Spleen (tissue), 13 donors: ENCODE measurements at regions of chr3 and their contacts with region 1.

Region 1: GRCh38 chr3:40191850-40192448 is 117.6 kb upstream of the EIF1B start:
- DNase-seq: peak; percentile 80
- H3K4me3 ChIP-seq: no peak overlapping the region
- H3K27ac ChIP-seq: no peak overlapping the region
- H3K4me1 ChIP-seq: no peaks in the 10 kb centered on the region
- H3K27me3 ChIP-seq: no peaks in the 10 kb centered on the region
- CTCF ChIP-seq: peak; percentile 82 to 95 (median 88)
- POLR2A ChIP-seq: no peak

Region 2: DNA sequence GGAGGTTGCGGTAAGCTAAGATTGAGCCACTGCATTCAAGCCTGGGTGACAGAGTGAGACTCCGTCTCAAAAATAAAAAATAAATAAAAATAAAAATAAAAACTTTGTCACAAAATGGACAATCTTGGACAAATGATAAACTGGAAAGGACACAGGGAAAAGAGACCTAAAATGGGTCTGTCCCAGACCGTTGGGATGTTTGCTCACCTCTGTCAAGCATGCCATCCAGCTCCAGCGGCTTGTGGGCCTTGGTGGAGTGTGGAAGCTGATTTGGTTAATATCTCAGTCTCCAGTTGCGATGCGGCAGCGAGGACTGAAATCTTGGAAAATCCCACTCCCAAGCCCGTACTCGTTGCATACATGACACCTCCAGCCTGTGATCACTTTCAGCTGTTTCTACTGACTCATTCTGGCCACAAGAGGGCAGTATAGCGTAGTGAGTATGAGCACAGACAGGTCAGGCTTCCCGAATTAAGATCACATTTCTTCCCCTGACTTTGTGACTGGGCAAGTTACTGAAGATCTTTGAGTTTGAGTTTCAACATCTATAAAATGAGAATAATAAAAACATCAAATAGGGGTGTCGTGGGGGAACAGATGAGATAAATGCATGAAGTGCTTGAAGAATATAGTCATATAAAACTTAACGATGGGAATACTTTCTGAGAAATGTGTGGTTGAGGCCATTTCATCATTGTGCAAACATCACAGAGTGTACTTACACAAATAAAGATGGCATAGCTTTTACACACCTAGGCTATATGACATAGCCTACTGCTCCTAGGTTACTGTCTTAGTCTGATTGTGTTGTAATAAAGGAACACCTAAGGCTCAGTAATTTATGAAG is 744.1 kb before region 1 on chr3:
- intact Hi-C with region 1: loop called (anchors 10 kb)
- DNase-seq: no peak
- H3K4me3 ChIP-seq: no peak overlapping the region
- H3K27ac ChIP-seq: no peak overlapping the region
- H3K4me1 ChIP-seq: peaks cover 0 to 6% (median 4%) of the 10 kb centered on the region in 6 donors
- H3K27me3 ChIP-seq: no peaks in the 10 kb centered on the region
- CTCF ChIP-seq: peak; percentile 41 to 90 (median 81)
- POLR2A ChIP-seq: no peak

Region 3: GRCh38 chr3:40350529-40350928 is 158.6 kb after region 1 on chr3:
- intact Hi-C with region 1: no loop called
- DNase-seq: no peak
- H3K4me3 ChIP-seq: no peak overlapping the region
- H3K27ac ChIP-seq: no peak overlapping the region
- H3K4me1 ChIP-seq: no peaks in the 10 kb centered on the region
- H3K27me3 ChIP-seq: peaks cover 0 to 6% (median 0%) of the 10 kb centered on the region in 7 donors
- CTCF ChIP-seq: no peak
- POLR2A ChIP-seq: no peak